T-cell (primary cell): ENCODE measurements at regions of chr17 and their contacts with region 1.

Region 1: GRCh38 chr17:48351831-48352332 is 78.1 kb downstream of the SKAP1 start:
- DNase-seq: peak in 2 of 35 experiments; percentile 14 to 69
- ATAC-seq: peak in 1 of 4 experiments; percentile 61
- H3K4me3 ChIP-seq: no peak overlapping the region
- H3K4me3 Mint-ChIP-seq: no peak overlapping the region
- H3K27ac ChIP-seq: no peak overlapping the region
- H3K27ac Mint-ChIP-seq: no peak overlapping the region
- H3K4me1 ChIP-seq: no peaks in the 10 kb centered on the region
- H3K4me1 Mint-ChIP-seq: peaks cover 15 to 18% (median 16%) of the 10 kb centered on the region in 3 donors
- H3K27me3 ChIP-seq: no peaks in the 10 kb centered on the region
- H3K27me3 Mint-ChIP-seq: no peaks in the 10 kb centered on the region

Region 2: GRCh38 chr17:48037036-48037837 is 314.6 kb before region 1 on chr17 and contains the start of gene COPZ2:
- CTCF ChIA-PET with region 1: no interaction called
- POLR2A ChIA-PET with region 1: no interaction called
- DNase-seq: peak in 34 of 35 experiments; percentile 32 to 78 (median 61)
- ATAC-seq: peak; percentile 93 to 96 (median 96)
- H3K4me3 ChIP-seq: peak within 1 kb of the TSS; percentile 75 to 78
- H3K4me3 Mint-ChIP-seq: peak within 1 kb of the TSS; percentile 78 to 86 (median 81)
- H3K27ac ChIP-seq: no peak within 1 kb of the TSS
- H3K27ac Mint-ChIP-seq: no peak within 1 kb of the TSS
- H3K4me1 ChIP-seq: peaks cover 2 to 16% of the 10 kb centered on the region in 2 experiments
- H3K4me1 Mint-ChIP-seq: peaks cover 5 to 7% (median 6%) of the 10 kb centered on the region in 3 donors
- H3K27me3 ChIP-seq: peaks cover 0 to 60% of the 10 kb centered on the region in 2 experiments
- H3K27me3 Mint-ChIP-seq: peaks cover 18 to 32% of the 10 kb centered on the region in 2 donors
- total RNA-seq, gene COPZ2: 1.2 to 2.6 (median 1.9) TPM

Region 3: GRCh38 chr17:48307814-48308411 is 44.0 kb before region 1 on chr17:
- CTCF ChIA-PET with region 1: interaction called in 1 of 2 experiments, 10 read pairs
- POLR2A ChIA-PET with region 1: no interaction called
- DNase-seq: peak; percentile 8 to 71 (median 39)
- ATAC-seq: peak; percentile 61 to 81 (median 78)
- H3K4me3 ChIP-seq: no peak overlapping the region
- H3K4me3 Mint-ChIP-seq: no peak overlapping the region
- H3K27ac ChIP-seq: no peak overlapping the region
- H3K27ac Mint-ChIP-seq: no peak overlapping the region
- H3K4me1 ChIP-seq: no peaks in the 10 kb centered on the region
- H3K4me1 Mint-ChIP-seq: peaks cover 12 to 37% (median 26%) of the 10 kb centered on the region in 3 donors
- H3K27me3 ChIP-seq: no peaks in the 10 kb centered on the region
- H3K27me3 Mint-ChIP-seq: no peaks in the 10 kb centered on the region

Region 4: DNA sequence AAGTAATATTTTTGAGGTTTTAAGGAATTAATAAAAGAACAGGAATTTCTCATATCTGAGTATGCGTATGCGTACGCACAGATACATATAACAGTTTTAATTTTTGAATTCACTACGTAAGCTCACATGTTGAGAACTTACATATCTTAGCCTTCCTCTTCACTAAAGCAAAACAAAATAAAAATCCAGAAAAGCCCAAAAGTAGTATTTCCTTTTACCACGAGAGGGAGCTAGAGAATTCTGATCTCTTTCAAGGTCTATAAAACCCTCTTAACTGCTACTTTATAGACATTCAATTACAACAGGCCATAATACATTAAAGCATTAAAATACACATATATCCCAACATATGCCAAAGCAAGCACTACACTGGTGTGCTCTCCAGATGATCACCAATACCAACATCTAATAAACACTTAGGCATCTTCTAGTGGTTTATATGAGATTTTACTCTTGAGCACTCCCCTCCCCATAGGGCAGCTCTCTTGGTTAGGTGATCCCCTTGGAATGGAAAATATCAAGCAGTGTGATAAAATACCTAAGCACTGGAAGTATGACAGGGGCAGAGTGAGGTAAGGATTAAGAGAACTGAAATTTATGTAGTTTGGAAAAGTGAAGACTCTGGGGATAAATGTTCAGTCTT is 15.9 kb before region 1 on chr17:
- CTCF ChIA-PET with region 1: interaction called in 1 of 2 experiments, 14 read pairs
- POLR2A ChIA-PET with region 1: interaction called in 1 of 2 experiments, 5 read pairs
- DNase-seq: peak in 2 of 35 experiments; percentile 12 to 79
- ATAC-seq: peak; percentile 48 to 60 (median 57)
- H3K4me3 ChIP-seq: no peak overlapping the region
- H3K4me3 Mint-ChIP-seq: no peak overlapping the region
- H3K27ac ChIP-seq: no peak overlapping the region
- H3K27ac Mint-ChIP-seq: peak overlapping the region in 1 of 2 donors; percentile 61
- H3K4me1 ChIP-seq: no peaks in the 10 kb centered on the region
- H3K4me1 Mint-ChIP-seq: peaks cover 6 to 9% (median 7%) of the 10 kb centered on the region in 3 donors
- H3K27me3 ChIP-seq: no peaks in the 10 kb centered on the region
- H3K27me3 Mint-ChIP-seq: no peaks in the 10 kb centered on the region

Region 5: GRCh38 chr17:48363161-48363560 is 11.3 kb after region 1 on chr17:
- CTCF ChIA-PET with region 1: interaction called, 10 to 23 read pairs
- POLR2A ChIA-PET with region 1: interaction called, 3 to 4 read pairs
- DNase-seq: no peak
- ATAC-seq: no peak
- H3K4me3 ChIP-seq: no peak overlapping the region
- H3K4me3 Mint-ChIP-seq: no peak overlapping the region
- H3K27ac ChIP-seq: no peak overlapping the region
- H3K27ac Mint-ChIP-seq: peak overlapping the region in 1 of 2 donors; percentile 37
- H3K4me1 ChIP-seq: peaks cover 2 to 3% of the 10 kb centered on the region in 2 experiments
- H3K4me1 Mint-ChIP-seq: peaks cover 43 to 55% (median 46%) of the 10 kb centered on the region in 3 donors
- H3K27me3 ChIP-seq: no peaks in the 10 kb centered on the region
- H3K27me3 Mint-ChIP-seq: no peaks in the 10 kb centered on the region

Region 6: DNA sequence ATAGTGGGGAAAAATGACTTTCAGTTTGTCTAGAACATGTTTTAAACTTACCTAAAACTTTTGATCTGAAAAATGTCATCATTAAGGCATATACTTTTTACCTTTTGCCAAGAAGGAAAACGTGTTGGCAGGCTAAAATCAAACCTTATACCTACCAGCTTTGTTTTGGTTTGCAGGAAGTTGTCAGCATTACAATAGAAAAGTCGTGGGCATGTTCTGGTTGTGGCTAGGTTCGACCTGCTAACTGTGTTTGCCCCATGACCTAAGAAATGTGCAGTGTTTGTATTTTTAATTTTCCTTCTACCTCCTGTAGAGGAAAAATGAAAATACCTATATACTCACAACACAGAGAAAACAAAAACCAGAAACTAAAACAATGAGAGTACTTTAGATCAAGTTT is 65.1 kb after region 1 on chr17:
- CTCF ChIA-PET with region 1: interaction called in 1 of 2 experiments, 10 read pairs
- POLR2A ChIA-PET with region 1: no interaction called
- DNase-seq: peak in 1 of 35 experiments; percentile 38
- ATAC-seq: peak; percentile 36 to 71 (median 55)
- H3K4me3 ChIP-seq: no peak overlapping the region
- H3K4me3 Mint-ChIP-seq: peak overlapping the region; percentile 34 to 61 (median 40)
- H3K27ac ChIP-seq: peak overlapping the region; percentile 72
- H3K27ac Mint-ChIP-seq: peak overlapping the region; percentile 91 to 96
- H3K4me1 ChIP-seq: peaks cover 56 to 57% of the 10 kb centered on the region in 2 experiments
- H3K4me1 Mint-ChIP-seq: peaks cover 88 to 94% (median 90%) of the 10 kb centered on the region in 3 donors
- H3K27me3 ChIP-seq: no peaks in the 10 kb centered on the region
- H3K27me3 Mint-ChIP-seq: no peaks in the 10 kb centered on the region

Region 7: DNA sequence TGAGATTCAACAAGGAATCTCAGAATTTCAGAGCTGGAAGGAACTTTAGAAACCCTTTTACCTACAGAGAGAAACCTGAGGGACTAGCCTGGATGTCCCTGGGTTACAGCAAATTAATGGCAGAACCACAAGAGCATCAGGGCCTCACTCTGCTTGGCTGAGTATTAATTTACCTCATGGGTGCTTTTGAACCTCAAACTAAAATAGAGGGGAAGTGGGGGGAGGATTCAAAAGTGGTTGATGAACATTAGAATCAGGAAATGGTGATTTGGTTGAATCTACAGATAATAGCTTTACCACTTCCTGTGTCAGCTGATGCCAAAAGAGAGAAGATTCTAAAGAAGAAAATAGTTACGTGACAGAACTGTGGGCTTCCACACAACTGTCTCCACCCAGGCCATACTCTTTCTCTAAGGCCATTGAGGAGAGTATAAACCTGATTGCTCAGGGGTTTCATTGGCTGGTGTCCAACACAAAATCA is 89.4 kb after region 1 on chr17:
- CTCF ChIA-PET with region 1: interaction called in 1 of 2 experiments, 14 read pairs
- POLR2A ChIA-PET with region 1: no interaction called
- DNase-seq: peak in 30 of 35 experiments; percentile 12 to 87 (median 38)
- ATAC-seq: peak; percentile 72 to 84 (median 79)
- H3K4me3 ChIP-seq: no peak overlapping the region
- H3K4me3 Mint-ChIP-seq: peak overlapping the region; percentile 52 to 67 (median 67)
- H3K27ac ChIP-seq: peak overlapping the region; percentile 88
- H3K27ac Mint-ChIP-seq: peak overlapping the region; percentile 98
- H3K4me1 ChIP-seq: peaks cover 81 to 100% of the 10 kb centered on the region in 2 experiments
- H3K4me1 Mint-ChIP-seq: peaks cover 91 to 95% (median 95%) of the 10 kb centered on the region in 3 donors
- H3K27me3 ChIP-seq: no peaks in the 10 kb centered on the region
- H3K27me3 Mint-ChIP-seq: no peaks in the 10 kb centered on the region

Region 8: DNA sequence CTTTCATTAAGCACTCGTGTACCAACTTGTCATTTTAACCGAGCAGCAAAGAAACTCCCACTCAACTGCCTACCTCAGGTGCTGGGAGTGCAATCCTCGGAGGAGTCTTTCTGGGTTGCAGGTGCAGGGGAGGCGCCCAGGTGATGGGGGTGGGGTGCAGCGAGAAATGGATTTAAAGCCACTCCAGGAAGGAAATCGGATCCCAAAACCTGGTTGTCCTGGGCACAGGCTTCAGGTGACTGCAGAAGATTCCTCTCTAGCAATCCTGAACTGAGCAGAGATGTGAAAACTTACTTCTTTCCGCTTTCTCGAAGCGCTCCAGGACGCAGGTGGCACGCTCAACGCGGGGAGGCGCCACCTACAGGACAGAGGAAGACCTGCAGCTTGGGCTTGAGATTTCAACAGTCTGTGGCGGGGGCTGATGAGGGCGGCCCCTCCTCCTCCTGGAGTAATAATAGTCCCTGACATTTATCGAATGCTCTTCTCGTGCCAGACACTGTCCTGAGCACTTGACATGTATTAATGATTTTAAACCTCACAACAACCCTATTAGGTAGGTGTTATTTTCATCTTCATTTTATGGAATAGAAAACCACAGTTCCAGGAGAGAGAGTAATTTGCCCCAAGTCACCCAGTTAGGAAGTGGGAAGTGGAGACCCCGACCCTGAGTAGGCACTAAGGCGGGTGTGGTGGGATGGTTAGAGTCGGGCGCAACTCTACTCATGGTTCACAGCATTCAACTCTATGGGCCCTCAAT is 105.4 kb after region 1 on chr17:
- CTCF ChIA-PET with region 1: interaction called, 4 to 21 read pairs
- POLR2A ChIA-PET with region 1: interaction called in 1 of 2 experiments, 9 read pairs
- DNase-seq: peak; percentile 56 to 92 (median 72)
- ATAC-seq: peak; percentile 67 to 79 (median 72)
- H3K4me3 ChIP-seq: peak overlapping the region; percentile 7 to 37
- H3K4me3 Mint-ChIP-seq: peak overlapping the region; percentile 51 to 61 (median 57)
- H3K27ac ChIP-seq: no peak overlapping the region
- H3K27ac Mint-ChIP-seq: peak overlapping the region in 1 of 2 donors; percentile 28
- H3K4me1 ChIP-seq: peaks cover 40 to 51% of the 10 kb centered on the region in 2 experiments
- H3K4me1 Mint-ChIP-seq: peaks cover 50 to 56% (median 55%) of the 10 kb centered on the region in 3 donors
- H3K27me3 ChIP-seq: no peaks in the 10 kb centered on the region
- H3K27me3 Mint-ChIP-seq: no peaks in the 10 kb centered on the region